Colonic mucosa (tissue), 4 donors: ENCODE measurements at regions of chr14 and their contacts with region 1.

Region 1: GRCh38 chr14:50773632-50774541 is 57.1 kb downstream of the NIN start:
- DNase-seq: peak; percentile 41
- H3K4me3 ChIP-seq: no peak overlapping the region
- H3K27ac ChIP-seq: no peak overlapping the region
- H3K4me1 ChIP-seq: no peaks in the 10 kb centered on the region
- H3K27me3 ChIP-seq: no peaks in the 10 kb centered on the region
- CTCF ChIP-seq: peak; percentile 69

Region 2: GRCh38 chr14:50311975-50312733 is 461.7 kb before region 1 on chr14 and contains the starts of genes DMAC2L and L2HGDH:
- intact Hi-C with region 1: loop called (anchors 10 kb)
- DNase-seq: peak; percentile 97
- H3K4me3 ChIP-seq: peak within 1 kb of the TSS; percentile 91
- H3K27ac ChIP-seq: peak within 1 kb of the TSS; percentile 82
- H3K4me1 ChIP-seq: peaks cover 6% of the 10 kb centered on the region
- H3K27me3 ChIP-seq: no peaks in the 10 kb centered on the region
- CTCF ChIP-seq: no peak
- total RNA-seq, gene DMAC2L: 15.2 to 20.9 TPM
- total RNA-seq, gene L2HGDH: 11.4 to 12.3 TPM

Region 3: GRCh38 chr14:50542941-50543418 is 230.9 kb before region 1 on chr14:
- intact Hi-C with region 1: loop called (anchors 5 kb)
- DNase-seq: peak; percentile 55
- H3K4me3 ChIP-seq: no peak overlapping the region
- H3K27ac ChIP-seq: peak overlapping the region; percentile 23
- H3K4me1 ChIP-seq: no peaks in the 10 kb centered on the region
- H3K27me3 ChIP-seq: no peaks in the 10 kb centered on the region
- CTCF ChIP-seq: peak; percentile 50

Region 4: GRCh38 chr14:50599700-50600444 is 174.0 kb before region 1 on chr14:
- intact Hi-C with region 1: loop called (anchors 5 kb)
- DNase-seq: no peak
- H3K4me3 ChIP-seq: no peak overlapping the region
- H3K27ac ChIP-seq: no peak overlapping the region
- H3K4me1 ChIP-seq: no peaks in the 10 kb centered on the region
- H3K27me3 ChIP-seq: no peaks in the 10 kb centered on the region
- CTCF ChIP-seq: peak; percentile 40

Region 5: GRCh38 chr14:50667996-50668825 is 105.7 kb before region 1 on chr14 and contains the start of gene SAV1:
- intact Hi-C with region 1: no loop called
- DNase-seq: peak; percentile 82
- H3K4me3 ChIP-seq: peak within 1 kb of the TSS; percentile 87
- H3K27ac ChIP-seq: peak within 1 kb of the TSS; percentile 96
- H3K4me1 ChIP-seq: no peaks in the 10 kb centered on the region
- H3K27me3 ChIP-seq: no peaks in the 10 kb centered on the region
- CTCF ChIP-seq: no peak
- total RNA-seq, gene SAV1: 15.9 to 21.8 TPM